Natural killer cell (primary cell): ENCODE measurements at regions of chr19 and their contacts with region 1.

Region 1: GRCh38 chr19:19956434-19957075 is 55.8 kb downstream of the ZNF93 start:
- DNase-seq: peak in 1 of 2 donors; percentile 4
- ATAC-seq: no peak
- H3K4me3 ChIP-seq: no peak overlapping the region
- H3K4me3 Mint-ChIP-seq: no peak overlapping the region
- H3K27ac ChIP-seq: no peak overlapping the region
- H3K27ac Mint-ChIP-seq: no peak overlapping the region
- H3K4me1 ChIP-seq: no peaks in the 10 kb centered on the region
- H3K4me1 Mint-ChIP-seq: peaks cover 5 to 8% of the 10 kb centered on the region in 2 donors
- H3K27me3 ChIP-seq: no peaks in the 10 kb centered on the region
- H3K27me3 Mint-ChIP-seq: no peaks in the 10 kb centered on the region
- CTCF ChIP-seq: no peak

Region 2: DNA sequence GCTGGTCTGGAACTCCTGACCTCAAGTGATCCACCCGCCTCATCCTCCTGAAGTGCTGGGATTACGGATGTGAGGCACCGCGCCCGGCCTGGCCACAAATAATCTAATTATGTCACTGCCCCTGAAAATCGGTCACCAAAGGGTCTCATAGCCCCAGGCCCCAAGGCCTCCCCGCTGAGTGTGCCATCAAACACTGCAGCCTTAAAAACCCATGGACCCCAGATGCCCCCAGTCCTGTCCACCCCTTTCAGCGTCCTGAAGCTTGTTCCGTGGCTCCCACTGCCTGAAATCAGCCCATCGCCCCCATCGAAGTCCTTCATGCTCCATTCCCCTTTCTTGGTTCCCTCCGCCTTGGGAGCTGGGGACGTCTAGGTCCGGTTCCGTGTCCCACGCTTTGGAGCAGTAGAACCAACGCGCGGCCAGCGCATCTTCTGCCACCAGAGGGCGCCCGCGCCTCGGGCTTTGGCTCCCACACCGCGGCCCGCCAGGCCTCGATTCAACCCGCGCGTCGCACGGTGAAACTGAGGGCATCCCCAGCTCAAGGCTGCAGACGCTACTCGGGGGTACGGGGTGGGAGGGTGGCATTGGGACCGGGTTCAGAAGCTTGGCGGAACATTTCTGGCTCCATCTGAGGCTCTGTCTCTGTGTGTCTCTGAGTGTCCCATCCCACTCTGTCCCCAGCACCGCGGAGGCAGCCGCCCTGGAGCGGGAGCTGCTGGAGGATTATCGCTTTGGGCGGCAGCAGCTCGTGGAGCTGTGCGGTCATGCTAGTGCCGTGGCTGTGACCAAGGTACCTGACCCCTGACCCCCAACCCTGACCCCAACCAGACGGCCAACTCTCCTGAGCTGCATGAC is 424.4 kb before region 1 on chr19:
- intact Hi-C with region 1: loop called (anchors 1 kb)
- DNase-seq: peak; percentile 88 to 92
- ATAC-seq: peak; percentile 83 to 93 (median 86)
- H3K4me3 ChIP-seq: no peak overlapping the region
- H3K4me3 Mint-ChIP-seq: peak overlapping the region; percentile 25
- H3K27ac ChIP-seq: no peak overlapping the region
- H3K27ac Mint-ChIP-seq: peak overlapping the region; percentile 58 to 83
- H3K4me1 ChIP-seq: peaks cover 11% of the 10 kb centered on the region
- H3K4me1 Mint-ChIP-seq: peaks cover 6 to 20% of the 10 kb centered on the region in 2 donors
- H3K27me3 ChIP-seq: no peaks in the 10 kb centered on the region
- H3K27me3 Mint-ChIP-seq: peaks cover 0 to 2% of the 10 kb centered on the region in 2 donors
- CTCF ChIP-seq: peak; percentile 95